Activated CD8-positive, alpha-beta memory T cell treated with anti-CD3 and anti-CD28 coated beads, Interleukin-2, amount 10 ng/mL, durations not matched to agents 7 days and 5 days (primary cell): ENCODE measurements at regions of chr16 and their contacts with region 1.

Region 1: DNA sequence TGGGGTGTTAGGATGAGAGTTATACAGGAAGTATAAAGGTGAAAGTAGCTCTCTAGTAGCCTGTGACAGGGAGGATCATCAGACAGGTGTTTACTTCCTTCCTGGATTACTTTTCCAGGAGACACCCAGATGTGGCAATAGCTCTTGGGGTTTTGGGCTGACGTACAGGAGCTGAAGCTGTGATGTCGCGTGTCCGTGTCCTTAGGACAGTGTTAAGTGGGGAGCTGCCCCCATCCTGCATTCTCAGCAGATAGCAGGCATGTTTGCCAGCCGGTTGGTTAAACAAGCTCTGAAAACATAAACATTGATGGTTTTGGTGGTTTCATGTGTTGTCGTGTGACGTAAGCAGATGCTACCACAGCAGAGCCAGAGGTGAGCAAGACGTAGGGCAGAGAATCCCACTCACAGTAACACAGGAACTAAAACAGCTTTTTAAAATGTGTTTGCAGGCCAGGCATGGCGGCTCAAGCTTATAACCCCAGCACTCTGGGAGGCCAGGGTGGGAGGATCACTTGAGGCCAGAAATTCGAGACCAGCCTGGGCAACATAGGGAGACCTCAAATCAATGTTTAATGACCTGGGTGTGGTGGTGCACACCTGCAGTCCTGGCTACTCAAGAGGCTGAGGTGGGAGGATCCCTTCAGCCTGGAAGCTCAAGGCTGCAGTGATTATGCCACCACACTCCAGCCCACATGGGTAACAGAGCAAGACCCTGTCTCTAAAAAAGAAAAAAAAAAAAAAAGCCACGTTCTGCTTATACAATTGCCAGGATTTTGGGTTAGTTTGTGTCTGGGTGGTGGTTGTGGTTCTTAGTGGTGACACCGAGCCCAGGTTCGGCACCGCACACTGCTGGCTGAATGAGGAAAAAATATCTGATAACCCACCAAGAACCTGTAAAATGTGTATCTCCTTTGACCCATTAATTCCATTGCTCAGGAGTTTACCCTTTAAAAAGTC is 18.2 kb upstream of the IL17C start:
- DNase-seq: peak; percentile 93
- ATAC-seq: peak; percentile 84
- H3K4me3 Mint-ChIP-seq: peak overlapping the region; percentile 18
- H3K27ac Mint-ChIP-seq: peak overlapping the region; percentile 79
- H3K4me1 Mint-ChIP-seq: peaks cover 43% of the 10 kb centered on the region
- H3K27me3 Mint-ChIP-seq: no peaks in the 10 kb centered on the region

Region 2: GRCh38 chr16:88633684-88634140 is 13.6 kb after region 1 on chr16:
- CTCF ChIA-PET with region 1: interaction called, 15 read pairs
- DNase-seq: peak; percentile 75
- ATAC-seq: peak; percentile 32
- H3K4me3 Mint-ChIP-seq: peak overlapping the region; percentile 70
- H3K27ac Mint-ChIP-seq: peak overlapping the region; percentile 75
- H3K4me1 Mint-ChIP-seq: peaks cover 32% of the 10 kb centered on the region
- H3K27me3 Mint-ChIP-seq: peaks cover 23% of the 10 kb centered on the region